IMR-90 (cell line): ENCODE measurements at regions of chr5 and their contacts with region 1.

Region 1: GRCh38 chr5:81202655-81203054 is 30.5 kb upstream of the CKMT2 start:
- DNase-seq: peak; percentile 14
- ATAC-seq: no peak
- H3K4me3 ChIP-seq: no peak overlapping the region
- H3K27ac ChIP-seq: no peak overlapping the region
- H3K4me1 ChIP-seq: no peaks in the 10 kb centered on the region
- H3K27me3 ChIP-seq: no peaks in the 10 kb centered on the region
- CTCF ChIP-seq: no peak
- POLR2A ChIP-seq: no peak
- RAD21 ChIP-seq: no peak

Region 2: GRCh38 chr5:80198399-80198798 is 1004.3 kb before region 1 on chr5:
- CTCF ChIA-PET with region 1: no interaction called
- POLR2A ChIA-PET with region 1: no interaction called
- dilution Hi-C with region 1: no loop called
- in situ Hi-C with region 1: no loop called
- intact Hi-C with region 1: no loop called
- DNase-seq: no peak
- ATAC-seq: no peak
- H3K4me3 ChIP-seq: no peak overlapping the region
- H3K27ac ChIP-seq: no peak overlapping the region
- H3K4me1 ChIP-seq: peaks cover 2% of the 10 kb centered on the region; the same call in 1 of the 2 replicates
- H3K27me3 ChIP-seq: no peaks in the 10 kb centered on the region
- CTCF ChIP-seq: no peak
- POLR2A ChIP-seq: no peak
- RAD21 ChIP-seq: no peak

Region 3: DNA sequence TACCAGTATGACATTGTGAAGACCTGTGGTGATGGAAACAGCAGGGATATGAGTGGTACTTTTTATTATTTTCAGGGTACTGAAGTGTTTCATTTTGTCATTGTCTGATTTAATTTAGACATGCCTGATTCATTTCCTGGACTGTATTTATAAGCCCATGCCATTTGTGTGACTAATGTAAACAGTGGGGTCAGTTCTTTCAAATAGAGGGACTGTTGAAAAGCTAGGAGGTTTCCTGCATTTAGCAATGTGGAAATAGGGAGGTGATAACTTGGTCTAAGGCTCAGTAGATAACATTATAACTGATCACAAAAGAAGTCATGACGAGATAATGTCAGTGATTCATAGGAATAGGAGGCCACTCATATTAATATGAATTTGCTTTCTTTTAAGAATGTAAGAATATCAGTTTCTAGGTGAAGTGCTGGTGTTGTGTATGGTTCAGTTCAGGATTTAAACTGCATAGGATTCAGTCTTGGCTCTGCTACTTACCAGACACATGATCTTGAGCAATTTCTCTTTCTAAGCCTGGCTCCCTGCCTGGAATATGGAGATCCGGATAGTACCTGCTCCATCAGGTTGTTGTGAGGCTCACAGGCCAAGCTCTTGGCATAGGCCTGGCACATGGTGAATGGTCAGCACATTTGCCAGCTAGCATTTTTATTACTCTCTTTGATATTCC is 235.0 kb before region 1 on chr5:
- CTCF ChIA-PET with region 1: no interaction called
- POLR2A ChIA-PET with region 1: interaction called, 10 read pairs
- dilution Hi-C with region 1: no loop called
- in situ Hi-C with region 1: no loop called
- intact Hi-C with region 1: no loop called
- DNase-seq: peak; percentile 93
- ATAC-seq: peak; percentile 74
- H3K4me3 ChIP-seq: no peak overlapping the region
- H3K27ac ChIP-seq: peak overlapping the region; percentile 81
- H3K4me1 ChIP-seq: peaks cover 10% of the 10 kb centered on the region
- H3K27me3 ChIP-seq: no peaks in the 10 kb centered on the region
- CTCF ChIP-seq: no peak
- POLR2A ChIP-seq: no peak
- RAD21 ChIP-seq: no peak

Region 4: GRCh38 chr5:81171769-81172168 is 30.9 kb before region 1 on chr5:
- CTCF ChIA-PET with region 1: no interaction called
- POLR2A ChIA-PET with region 1: interaction called, 10 read pairs
- dilution Hi-C with region 1: no loop called
- in situ Hi-C with region 1: no loop called
- intact Hi-C with region 1: no loop called
- DNase-seq: no peak
- ATAC-seq: no peak
- H3K4me3 ChIP-seq: no peak overlapping the region
- H3K27ac ChIP-seq: no peak overlapping the region
- H3K4me1 ChIP-seq: no peaks in the 10 kb centered on the region
- H3K27me3 ChIP-seq: no peaks in the 10 kb centered on the region
- CTCF ChIP-seq: no peak
- POLR2A ChIP-seq: no peak
- RAD21 ChIP-seq: no peak